ENCODE measurements at regions of chr5 and their contacts with region 1.

Region 1: GRCh38 chr5:133423618-133424282 is 188.6 kb downstream of the FSTL4 start:
- DNase-seq: no peak
- H3K4me3 ChIP-seq: no peak overlapping the region
- H3K27ac ChIP-seq: no peak overlapping the region
- H3K4me1 ChIP-seq: peaks cover 0 to 4% (median 0%) of the 10 kb centered on the region in 4 donors
- H3K27me3 ChIP-seq: no peaks in the 10 kb centered on the region
- CTCF ChIP-seq: peak; percentile 38 to 84 (median 74)
- EP300 ChIP-seq: no peak
- POLR2A ChIP-seq: no peak

Region 2: DNA sequence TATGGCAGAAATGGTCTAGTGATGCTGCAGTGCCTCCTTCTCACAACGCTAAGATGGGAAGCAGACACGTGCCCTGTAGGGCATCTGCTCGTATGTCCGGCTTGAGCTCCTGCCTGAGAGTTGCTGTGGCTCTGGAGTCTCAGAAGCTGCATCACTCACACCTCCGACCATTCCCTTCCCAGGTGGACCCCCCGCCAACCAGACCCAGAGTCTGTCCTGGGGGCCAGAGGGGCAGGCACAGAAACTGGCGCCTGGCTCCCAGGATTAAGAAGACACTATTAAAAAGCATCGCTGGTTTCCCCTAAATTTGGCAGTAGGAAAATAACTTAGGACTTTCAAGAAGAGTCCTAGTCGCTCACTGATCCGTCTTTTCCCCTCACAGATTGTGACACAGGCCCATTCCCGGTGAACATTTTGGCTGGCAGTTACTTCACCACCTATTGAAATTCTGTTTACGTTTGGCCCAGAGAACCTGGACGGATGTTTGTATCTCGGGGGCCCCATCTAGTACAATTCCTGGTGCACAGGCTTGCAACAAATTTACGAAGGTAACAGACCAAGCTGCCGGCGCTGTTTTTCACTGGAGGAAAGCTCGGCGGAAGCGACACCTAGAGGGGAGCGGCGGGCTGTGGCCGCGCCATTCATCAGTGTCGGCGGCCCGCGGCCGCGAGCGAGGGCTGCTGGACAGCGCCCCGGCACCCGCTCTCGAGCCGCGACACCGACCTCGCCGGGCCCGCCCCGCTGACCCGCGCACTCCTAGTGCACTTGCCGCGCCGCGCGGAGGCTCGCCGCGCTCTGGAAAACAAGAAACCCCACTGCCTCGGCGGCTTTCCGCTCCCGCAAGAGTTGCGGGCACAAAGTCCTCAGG is 187.0 kb after region 1 on chr5:
- intact Hi-C with region 1: loop called (anchors 10 kb)
- DNase-seq: no peak
- H3K4me3 ChIP-seq: peak overlapping the region in 3 of 4 donors; percentile 27 to 45 (median 42)
- H3K27ac ChIP-seq: no peak overlapping the region
- H3K4me1 ChIP-seq: peaks cover 0 to 24% (median 22%) of the 10 kb centered on the region in 4 donors
- H3K27me3 ChIP-seq: peaks cover 34 to 77% (median 55%) of the 10 kb centered on the region in 3 donors
- CTCF ChIP-seq: peak in 2 of 4 experiments; percentile 24 to 30
- EP300 ChIP-seq: no peak
- POLR2A ChIP-seq: no peak

Region 3: GRCh38 chr5:134620634-134621033 is 1196.9 kb after region 1 on chr5:
- intact Hi-C with region 1: no loop called
- DNase-seq: no peak
- H3K4me3 ChIP-seq: no peak overlapping the region
- H3K27ac ChIP-seq: no peak overlapping the region
- H3K4me1 ChIP-seq: no peaks in the 10 kb centered on the region
- H3K27me3 ChIP-seq: no peaks in the 10 kb centered on the region
- CTCF ChIP-seq: no peak
- EP300 ChIP-seq: no peak
- POLR2A ChIP-seq: no peak